Heart right ventricle (tissue), 16 donors: ENCODE measurements at regions of chr9 and their contacts with region 1.

Region 1: GRCh38 chr9:127910613-127911205 is 6.1 kb downstream of the ST6GALNAC4 start:
- DNase-seq: no peak
- ATAC-seq: no peak
- H3K4me3 ChIP-seq: no peak overlapping the region
- H3K27ac ChIP-seq: no peak overlapping the region
- H3K4me1 ChIP-seq: peaks cover 5 to 32% (median 26%) of the 10 kb centered on the region in 9 donors
- H3K27me3 ChIP-seq: no peaks in the 10 kb centered on the region
- CTCF ChIP-seq: peak in 1 of 9 donors; percentile 14

Region 2: GRCh38 chr9:127347831-127348779 is 562.6 kb before region 1 on chr9:
- intact Hi-C with region 1: no loop called
- DNase-seq: peak in 1 of 2 donors; percentile 24
- ATAC-seq: peak in 5 of 8 donors; percentile 49 to 78 (median 76)
- H3K4me3 ChIP-seq: no peak overlapping the region
- H3K27ac ChIP-seq: peak overlapping the region in 2 of 10 donors; percentile 38 to 51
- H3K4me1 ChIP-seq: peaks cover 0 to 68% (median 12%) of the 10 kb centered on the region in 9 donors
- H3K27me3 ChIP-seq: no peaks in the 10 kb centered on the region
- CTCF ChIP-seq: peak in 8 of 9 donors; percentile 43 to 78 (median 56)

Region 3: DNA sequence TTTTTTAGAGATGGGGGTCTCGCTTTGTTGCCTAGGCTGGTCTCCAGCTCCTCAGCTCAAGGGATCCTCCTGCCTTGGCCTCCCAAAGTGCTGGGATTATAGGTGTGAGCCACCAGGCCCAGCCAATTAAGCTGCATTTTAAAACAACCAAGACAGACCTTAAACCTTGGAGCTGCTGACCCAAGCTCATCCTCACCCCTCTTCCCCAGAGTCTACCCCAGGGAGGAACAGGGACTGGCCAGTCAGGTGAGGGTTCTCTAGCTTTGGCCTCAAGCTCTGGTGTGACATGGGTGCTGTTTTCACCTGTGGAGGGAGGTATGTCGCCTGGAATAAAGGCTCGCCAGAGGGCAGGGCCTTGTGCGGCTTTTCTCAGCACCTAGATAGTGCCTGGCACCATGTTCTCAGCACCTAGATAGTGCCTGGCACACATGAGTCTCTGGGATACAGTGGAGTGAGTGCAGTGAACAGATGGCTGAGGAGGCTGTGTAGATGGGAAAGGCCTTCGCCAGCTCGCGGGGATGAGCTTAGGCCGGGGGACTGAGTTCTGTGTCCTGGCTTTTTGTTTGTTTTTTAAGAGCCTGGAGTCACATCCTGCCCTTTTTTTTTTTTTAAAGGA is 117.5 kb before region 1 on chr9:
- intact Hi-C with region 1: loop called in 3 of 10 experiments (anchors 5 to 10 kb)
- DNase-seq: no peak
- ATAC-seq: peak in 6 of 8 donors; percentile 1 to 73 (median 38)
- H3K4me3 ChIP-seq: no peak overlapping the region
- H3K27ac ChIP-seq: peak overlapping the region in 6 of 10 donors; percentile 4 to 74 (median 32)
- H3K4me1 ChIP-seq: peaks cover 19 to 62% (median 39%) of the 10 kb centered on the region in 9 donors
- H3K27me3 ChIP-seq: no peaks in the 10 kb centered on the region
- CTCF ChIP-seq: no peak